Activated naive CD4-positive, alpha-beta T cell treated with anti-CD3 and anti-CD28 coated beads for 36 hours (primary cell): ENCODE measurements at regions of chr5 and their contacts with region 1.

Region 1: GRCh38 chr5:179732417-179732917 is at the start of gene MAML1:
- DNase-seq: peak; percentile 100
- H3K4me3 Mint-ChIP-seq: peak within 1 kb of the TSS; percentile 96
- H3K27ac Mint-ChIP-seq: peak within 1 kb of the TSS; percentile 92
- H3K4me1 Mint-ChIP-seq: peaks cover 41% of the 10 kb centered on the region
- H3K27me3 Mint-ChIP-seq: no peaks in the 10 kb centered on the region
- total RNA-seq, gene MAML1: 20.7 TPM

Region 2: DNA sequence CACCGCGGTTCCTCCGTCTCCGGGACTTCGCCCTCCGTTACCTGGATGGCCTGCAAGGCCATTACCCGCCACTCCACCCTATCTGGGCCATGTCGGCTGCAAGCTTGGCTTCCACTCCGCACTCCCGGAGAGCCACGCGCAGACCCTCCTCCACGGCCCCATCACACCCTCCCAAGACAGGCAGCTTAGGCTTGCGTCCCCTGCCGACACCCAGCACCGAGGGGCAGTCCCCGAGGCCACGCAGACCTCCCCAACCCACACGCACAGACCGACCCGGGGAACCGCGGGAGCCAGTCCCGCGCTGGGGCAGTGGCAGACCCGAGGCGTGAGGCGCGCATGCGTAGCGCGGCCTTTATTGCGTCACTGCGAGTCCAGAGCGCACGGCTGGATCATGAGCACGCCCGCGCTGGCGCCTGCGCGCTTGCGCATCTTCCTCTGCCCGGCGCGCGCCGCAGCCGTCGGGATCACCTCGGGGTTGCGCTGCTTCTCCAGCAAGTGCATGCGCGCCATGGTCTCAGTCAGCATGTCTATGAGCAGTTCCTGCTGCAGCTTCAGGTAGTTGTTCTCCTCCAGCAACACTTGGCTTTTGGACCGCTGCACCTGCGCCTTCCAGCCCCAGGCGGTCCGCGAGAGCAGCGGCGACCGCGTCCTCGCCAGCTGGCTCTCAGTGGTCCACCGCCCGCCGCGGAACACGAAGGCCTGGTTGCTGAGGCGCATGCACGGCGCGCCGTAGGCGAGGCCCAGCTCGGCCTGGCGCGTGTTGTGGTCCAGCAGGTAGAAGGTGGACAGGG is 54.0 kb before region 1 on chr5:
- CTCF ChIA-PET with region 1: no interaction called
- intact Hi-C with region 1: loop called (anchors 1 kb)
- DNase-seq: peak; percentile 94
- H3K4me3 Mint-ChIP-seq: peak overlapping the region; percentile 99
- H3K27ac Mint-ChIP-seq: peak overlapping the region; percentile 95
- H3K4me1 Mint-ChIP-seq: peaks cover 36% of the 10 kb centered on the region
- H3K27me3 Mint-ChIP-seq: no peaks in the 10 kb centered on the region

Region 3: DNA sequence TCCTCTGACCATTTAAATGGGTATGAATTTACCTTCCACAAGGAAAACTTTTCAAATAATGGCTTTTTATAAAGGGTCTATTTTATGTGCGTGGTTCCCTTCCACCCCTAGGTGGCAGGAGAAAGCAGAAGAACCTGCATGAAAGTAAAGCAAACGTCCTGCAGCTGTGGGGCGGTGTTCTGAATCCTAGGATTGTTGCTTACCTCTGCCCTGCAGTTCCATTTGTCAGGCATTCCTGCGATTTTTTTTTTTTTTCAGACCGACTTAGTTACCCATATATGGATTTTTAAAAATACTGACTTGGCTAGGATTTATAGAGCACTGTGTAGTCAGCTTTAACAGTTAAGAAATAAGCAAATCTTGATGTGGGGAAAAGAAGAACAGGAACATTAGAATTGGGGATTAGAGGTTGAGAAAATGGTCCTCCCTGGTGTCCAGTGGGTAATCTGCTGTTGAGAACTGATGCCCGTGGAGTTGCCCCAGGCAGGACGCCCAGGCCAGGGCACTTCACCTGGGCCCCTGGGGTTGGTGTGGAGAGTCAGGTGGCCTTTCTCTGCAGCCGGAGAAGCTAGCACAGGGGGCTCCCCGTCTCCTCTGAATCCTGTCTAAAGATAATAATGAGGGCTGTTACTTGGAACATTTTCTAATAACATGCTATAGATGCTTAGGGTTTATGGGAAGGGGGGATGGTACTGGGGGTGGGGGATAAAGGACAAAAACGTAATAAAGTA is 30.9 kb after region 1 on chr5:
- CTCF ChIA-PET with region 1: interaction called, 4 read pairs
- intact Hi-C with region 1: loop called (anchors 1 kb)
- DNase-seq: peak; percentile 75
- H3K4me3 Mint-ChIP-seq: no peak overlapping the region
- H3K27ac Mint-ChIP-seq: no peak overlapping the region
- H3K4me1 Mint-ChIP-seq: peaks cover 61% of the 10 kb centered on the region
- H3K27me3 Mint-ChIP-seq: no peaks in the 10 kb centered on the region

Region 4: GRCh38 chr5:179806250-179807222 is 74.1 kb after region 1 on chr5 and contains the start of gene MGAT4B:
- CTCF ChIA-PET with region 1: no interaction called
- intact Hi-C with region 1: loop called (anchors 2 kb)
- DNase-seq: peak; percentile 62
- H3K4me3 Mint-ChIP-seq: peak within 1 kb of the TSS; percentile 84
- H3K27ac Mint-ChIP-seq: no peak within 1 kb of the TSS
- H3K4me1 Mint-ChIP-seq: peaks cover 38% of the 10 kb centered on the region
- H3K27me3 Mint-ChIP-seq: no peaks in the 10 kb centered on the region
- total RNA-seq, gene MGAT4B: 57.7 to 59.9 TPM

Region 5: DNA sequence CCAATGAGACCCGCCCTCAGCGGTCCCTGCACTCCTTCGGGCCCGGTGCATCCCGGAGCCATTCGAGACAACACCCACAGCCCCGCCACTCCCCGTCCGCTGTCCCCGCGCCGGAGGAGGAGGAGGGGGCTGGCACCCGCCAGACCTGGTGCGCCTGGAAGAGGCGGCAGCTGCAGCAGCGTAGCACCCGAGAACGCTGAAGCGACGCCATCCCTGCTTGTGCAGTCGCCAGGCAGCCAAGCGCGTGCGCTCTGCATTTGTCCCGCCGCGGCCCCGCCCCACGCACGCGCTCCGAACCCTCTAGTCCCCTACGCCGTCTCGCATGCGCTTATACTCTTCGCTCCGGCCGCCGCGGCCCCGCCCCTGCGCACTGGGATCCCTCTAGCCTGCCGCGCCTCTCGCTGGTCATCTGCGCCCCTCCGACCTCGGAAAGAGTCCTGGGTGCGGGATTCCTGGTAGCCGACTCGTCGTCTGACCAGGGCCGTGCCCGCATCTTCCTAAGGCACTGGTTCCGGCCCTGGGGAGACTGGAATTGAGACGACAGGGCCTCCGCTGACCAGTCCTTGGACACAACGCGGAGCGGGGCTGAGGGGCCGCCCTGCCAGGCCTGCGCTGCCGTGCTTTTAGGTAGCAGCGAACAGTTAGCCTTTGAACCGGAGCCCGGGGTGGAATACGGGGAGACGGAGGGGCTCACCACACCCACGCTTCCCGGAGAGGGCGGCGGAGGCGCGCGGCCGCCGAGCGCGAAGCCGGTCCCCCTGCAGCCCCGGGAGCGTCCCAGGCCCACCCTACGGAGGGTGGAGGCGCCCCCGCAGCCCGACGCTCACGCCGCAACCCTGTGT is 126.3 kb after region 1 on chr5 and contains the start of gene MRNIP:
- CTCF ChIA-PET with region 1: no interaction called
- intact Hi-C with region 1: loop called (anchors 1 kb)
- DNase-seq: peak; percentile 93
- H3K4me3 Mint-ChIP-seq: peak within 1 kb of the TSS; percentile 93
- H3K27ac Mint-ChIP-seq: peak within 1 kb of the TSS; percentile 82
- H3K4me1 Mint-ChIP-seq: peaks cover 14% of the 10 kb centered on the region
- H3K27me3 Mint-ChIP-seq: no peaks in the 10 kb centered on the region
- total RNA-seq, gene MRNIP: 16.2 to 16.3 TPM